Breast epithelium (tissue), 4 donors: ENCODE measurements at regions of chr14 and their contacts with region 1.

Region 1: DNA sequence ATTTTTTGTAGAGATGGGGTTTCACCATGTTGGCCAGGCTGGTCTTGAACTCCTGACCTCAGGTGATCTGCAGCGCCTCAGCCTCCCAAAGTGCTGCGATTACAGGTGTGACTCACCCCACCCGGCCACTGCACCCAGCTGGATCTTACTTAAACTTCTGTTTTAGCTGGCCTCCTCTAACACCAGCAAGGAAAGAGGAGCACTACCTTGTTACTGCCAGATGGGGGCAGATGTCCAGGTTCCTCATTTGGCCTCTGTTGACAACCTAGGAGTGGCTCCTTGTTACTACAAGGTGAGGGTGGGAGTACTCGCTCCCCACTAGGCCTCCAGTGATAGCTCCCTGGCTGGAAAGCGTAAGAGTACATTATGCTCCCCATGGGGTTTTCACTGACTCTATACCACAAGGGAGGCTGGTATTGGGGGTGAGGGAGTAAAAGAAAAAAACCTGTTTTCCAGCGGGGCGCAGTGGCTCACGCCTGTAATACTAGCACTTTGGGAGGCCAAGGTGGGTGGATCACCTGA is 13.1 kb upstream of the ARF6 start:
- DNase-seq: no peak
- H3K4me3 ChIP-seq: no peak overlapping the region
- H3K27ac ChIP-seq: no peak overlapping the region
- H3K4me1 ChIP-seq: no peaks in the 10 kb centered on the region
- H3K27me3 ChIP-seq: no peaks in the 10 kb centered on the region
- CTCF ChIP-seq: peak in 2 of 3 donors; percentile 43 to 53
- POLR2A ChIP-seq: no peak

Region 2: GRCh38 chr14:50109342-50109741 is 229.6 kb after region 1 on chr14:
- intact Hi-C with region 1: loop called (anchors 10 kb)
- DNase-seq: no peak
- H3K4me3 ChIP-seq: no peak overlapping the region
- H3K27ac ChIP-seq: no peak overlapping the region
- H3K4me1 ChIP-seq: no peaks in the 10 kb centered on the region
- H3K27me3 ChIP-seq: no peaks in the 10 kb centered on the region
- CTCF ChIP-seq: no peak
- POLR2A ChIP-seq: no peak